Activated CD8-positive, alpha-beta memory T cell treated with anti-CD3 and anti-CD28 coated beads, Interleukin-2, amount 10 ng/mL, durations not matched to agents 7 days and 5 days (primary cell): ENCODE measurements at regions of chr10 and their contacts with region 1.

Region 1: DNA sequence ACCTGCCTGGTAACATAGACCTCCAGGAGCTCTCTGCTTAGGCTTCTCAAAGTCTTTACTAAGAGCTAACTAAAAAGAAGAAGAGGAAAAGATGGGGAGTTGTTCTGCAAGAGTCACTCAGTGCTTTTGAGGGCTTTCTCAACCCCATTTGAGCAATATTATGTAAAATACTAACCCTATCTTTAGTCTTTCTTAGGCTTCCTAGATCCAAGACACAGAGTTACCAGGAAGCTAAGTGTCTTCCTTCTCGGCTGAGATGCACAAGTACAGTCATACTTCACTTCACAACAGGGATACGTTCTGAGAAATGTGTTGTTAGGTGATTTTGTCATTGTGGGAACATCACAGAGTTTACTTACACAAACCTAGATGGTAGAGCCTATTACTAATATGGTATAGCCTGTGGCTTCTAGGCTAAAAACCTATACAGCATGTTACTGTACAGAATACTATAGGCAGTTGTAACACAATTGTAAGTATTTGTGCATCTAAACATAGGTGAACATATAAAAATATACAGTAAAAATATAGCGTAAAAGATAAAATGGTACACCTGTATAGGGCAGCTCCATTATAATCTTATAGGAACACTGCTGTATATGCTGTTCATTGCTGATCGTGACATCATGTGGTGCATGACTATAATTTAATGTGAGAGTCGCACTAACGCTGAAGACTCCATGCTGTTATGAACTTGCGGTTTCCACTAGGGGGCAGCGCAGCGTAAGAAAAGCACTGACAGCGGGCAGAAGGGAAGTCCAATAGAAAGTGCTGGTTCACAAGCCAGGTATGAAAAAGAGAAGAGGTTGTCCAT is 16.3 kb downstream of the ANKRD22 start:
- DNase-seq: peak; percentile 95
- ATAC-seq: peak; percentile 91
- H3K4me3 Mint-ChIP-seq: no peak overlapping the region
- H3K27ac Mint-ChIP-seq: no peak overlapping the region
- H3K4me1 Mint-ChIP-seq: peaks cover 34% of the 10 kb centered on the region
- H3K27me3 Mint-ChIP-seq: no peaks in the 10 kb centered on the region

Region 2: DNA sequence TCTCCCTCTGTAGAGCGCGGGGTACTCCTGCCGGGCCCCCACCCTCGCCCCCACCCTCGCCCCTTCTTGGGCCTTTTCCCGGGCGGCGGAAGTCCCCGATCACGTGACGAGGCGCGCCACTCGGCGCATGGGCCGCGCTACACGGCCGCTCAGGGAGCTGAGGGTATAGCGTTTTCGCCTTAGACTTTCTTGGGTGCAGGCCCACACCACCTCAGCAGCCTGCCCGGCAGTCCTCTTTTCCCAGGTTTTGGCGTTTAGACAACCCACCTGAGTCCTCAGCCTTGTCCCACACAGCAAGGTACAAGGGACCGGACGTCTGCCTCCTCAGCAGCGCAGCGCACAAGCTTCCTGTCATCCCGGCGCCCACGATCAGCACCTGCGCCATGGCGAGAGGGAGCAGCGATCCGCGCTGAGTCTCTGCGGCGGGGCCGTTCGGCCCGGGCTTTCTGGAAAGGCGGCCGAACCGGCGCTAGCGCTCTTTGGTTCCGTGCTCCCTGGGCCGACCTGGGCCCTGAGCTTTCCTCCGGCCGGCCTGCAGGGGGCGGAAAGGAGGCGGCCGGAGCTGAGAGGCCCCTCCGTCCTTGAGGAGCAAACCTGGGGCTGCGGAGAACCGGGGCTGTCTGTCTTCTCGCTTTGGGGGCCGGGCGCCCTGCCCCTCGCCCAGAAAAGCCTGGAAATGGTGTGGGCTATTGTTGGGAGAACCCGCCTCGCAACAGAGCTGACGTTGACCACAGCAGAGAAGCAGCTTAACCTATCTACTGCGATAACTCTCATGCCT is 252.3 kb before region 1 on chr10 and contains the start of gene RNLS:
- CTCF ChIA-PET with region 1: interaction called, 12 read pairs
- DNase-seq: peak; percentile 78
- ATAC-seq: peak; percentile 91
- H3K4me3 Mint-ChIP-seq: peak within 1 kb of the TSS; percentile 82
- H3K27ac Mint-ChIP-seq: peak within 1 kb of the TSS; percentile 88
- H3K4me1 Mint-ChIP-seq: peaks cover 10% of the 10 kb centered on the region
- H3K27me3 Mint-ChIP-seq: peaks cover 15% of the 10 kb centered on the region
- total RNA-seq, gene RNLS: 2.9 to 3.7 TPM

Region 3: DNA sequence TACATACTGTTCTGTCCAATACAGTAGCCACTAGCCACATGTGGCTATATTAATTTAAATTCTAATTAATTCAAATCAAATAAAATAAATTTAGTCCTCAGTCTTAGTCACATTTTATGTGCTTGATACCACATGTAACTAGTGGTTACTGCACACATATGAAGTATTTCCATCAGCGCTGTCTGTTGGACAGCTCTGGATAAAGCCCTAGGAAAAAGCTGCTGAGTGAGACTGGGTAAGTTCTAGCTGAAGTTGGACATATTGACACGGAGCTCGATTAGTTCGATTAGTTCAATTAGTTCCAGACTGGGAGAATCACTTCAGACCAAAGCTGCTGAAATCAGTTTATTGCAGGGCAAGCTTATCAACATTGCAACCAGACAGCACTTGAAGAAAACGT is 47.8 kb before region 1 on chr10:
- CTCF ChIA-PET with region 1: no interaction called
- DNase-seq: no peak
- ATAC-seq: no peak
- H3K4me3 Mint-ChIP-seq: no peak overlapping the region
- H3K27ac Mint-ChIP-seq: no peak overlapping the region
- H3K4me1 Mint-ChIP-seq: peaks cover 9% of the 10 kb centered on the region
- H3K27me3 Mint-ChIP-seq: peaks cover 7% of the 10 kb centered on the region

Region 4: DNA sequence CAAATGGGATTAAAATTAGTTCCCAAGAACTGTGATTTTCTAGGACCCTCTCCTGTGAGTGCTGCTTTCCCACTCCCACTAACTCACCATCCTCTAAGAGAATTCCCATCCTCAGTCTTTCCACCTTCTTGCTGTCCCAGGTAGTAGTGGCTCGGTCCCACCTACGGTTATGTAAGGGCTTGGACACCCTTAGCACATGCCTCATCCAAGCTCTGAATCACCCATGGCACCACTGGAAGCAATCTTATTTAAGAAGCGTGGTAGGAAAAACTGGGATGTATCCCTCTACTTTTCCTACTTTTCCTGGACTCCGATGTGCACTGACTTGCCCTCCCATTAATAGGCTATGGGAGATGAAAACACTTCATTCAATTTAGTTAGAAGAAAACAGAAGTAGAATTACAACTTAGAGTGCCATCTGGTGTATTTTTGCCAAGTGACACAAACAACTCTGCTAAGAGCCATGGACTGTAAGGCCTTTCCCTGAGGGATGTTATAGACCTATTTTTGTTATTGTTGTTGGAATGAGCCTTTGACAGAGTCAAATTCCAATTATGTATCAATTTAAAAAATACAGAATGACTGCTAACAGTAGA is 30.1 kb after region 1 on chr10:
- CTCF ChIA-PET with region 1: interaction called, 15 read pairs
- DNase-seq: no peak
- ATAC-seq: no peak
- H3K4me3 Mint-ChIP-seq: no peak overlapping the region
- H3K27ac Mint-ChIP-seq: no peak overlapping the region
- H3K4me1 Mint-ChIP-seq: peaks cover 5% of the 10 kb centered on the region
- H3K27me3 Mint-ChIP-seq: peaks cover 7% of the 10 kb centered on the region

Region 5: DNA sequence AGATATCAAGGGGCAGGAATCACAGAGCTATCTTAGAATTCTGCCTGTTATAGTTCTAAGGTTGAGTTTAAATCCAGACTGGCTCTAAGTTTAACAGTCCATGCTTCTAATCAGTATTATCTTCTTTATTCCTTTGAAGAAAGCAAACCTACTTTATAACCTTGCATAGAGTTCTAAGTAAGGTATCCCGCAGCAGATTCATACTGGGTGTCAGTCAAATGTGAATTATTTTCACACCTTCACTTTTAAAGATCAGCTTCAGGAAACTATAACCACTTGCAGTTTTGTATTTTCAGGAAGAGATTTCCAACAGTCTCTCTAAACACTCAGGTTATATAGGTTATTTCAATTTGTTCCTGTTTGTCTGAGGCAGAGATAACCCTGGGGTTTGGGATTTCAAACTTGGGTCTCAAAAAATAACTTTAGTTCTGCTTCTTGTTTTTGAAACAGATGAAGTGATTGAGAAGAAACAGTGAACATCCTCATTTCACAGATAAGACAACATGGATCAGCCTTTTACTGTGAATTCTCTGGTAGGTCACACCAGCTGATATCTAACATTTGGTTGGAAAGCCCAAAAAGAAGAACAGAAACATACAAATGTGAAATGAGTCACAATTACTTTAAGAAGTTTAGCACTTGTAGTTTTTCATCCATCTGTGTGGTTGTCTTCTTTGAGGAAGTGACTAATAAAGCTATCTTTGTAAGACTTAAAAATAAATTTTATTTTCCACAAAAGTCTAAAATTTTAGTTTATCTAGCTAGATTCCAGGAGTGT is 66.1 kb after region 1 on chr10:
- CTCF ChIA-PET with region 1: interaction called, 31 read pairs
- DNase-seq: no peak
- ATAC-seq: peak; percentile 73
- H3K4me3 Mint-ChIP-seq: no peak overlapping the region
- H3K27ac Mint-ChIP-seq: peak overlapping the region; percentile 61
- H3K4me1 Mint-ChIP-seq: peaks cover 47% of the 10 kb centered on the region
- H3K27me3 Mint-ChIP-seq: no peaks in the 10 kb centered on the region

Region 6: GRCh38 chr10:89217057-89217990 is 382.0 kb after region 1 on chr10:
- CTCF ChIA-PET with region 1: interaction called, 10 read pairs
- DNase-seq: peak; percentile 76
- ATAC-seq: peak; percentile 53
- H3K4me3 Mint-ChIP-seq: no peak overlapping the region
- H3K27ac Mint-ChIP-seq: peak overlapping the region; percentile 72
- H3K4me1 Mint-ChIP-seq: peaks cover 15% of the 10 kb centered on the region
- H3K27me3 Mint-ChIP-seq: no peaks in the 10 kb centered on the region